Naive thymus-derived CD4-positive, alpha-beta T cell (primary cell): ENCODE measurements at regions of chr5 and their contacts with region 1.

Region 1: GRCh38 chr5:88226881-88227450 is 41.7 kb downstream of the TMEM161B start:
- DNase-seq: no peak
- ATAC-seq: no peak
- H3K4me3 ChIP-seq: no peak overlapping the region
- H3K4me3 Mint-ChIP-seq: no peak overlapping the region
- H3K27ac ChIP-seq: no peak overlapping the region
- H3K27ac Mint-ChIP-seq: peak overlapping the region in 2 of 9 donors; percentile 59 to 73
- H3K4me1 ChIP-seq: no peaks in the 10 kb centered on the region
- H3K4me1 Mint-ChIP-seq: peaks cover 0 to 6% (median 0%) of the 10 kb centered on the region in 7 donors
- H3K27me3 ChIP-seq: no peaks in the 10 kb centered on the region
- H3K27me3 Mint-ChIP-seq: no peaks in the 10 kb centered on the region

Region 2: GRCh38 chr5:88245893-88246244 is 18.9 kb after region 1 on chr5:
- CTCF ChIA-PET with region 1: interaction called, 3 read pairs
- POLR2A ChIA-PET with region 1: no interaction called
- intact Hi-C with region 1: loop called in 1 of 2 experiments (anchors 2 kb)
- DNase-seq: no peak
- ATAC-seq: no peak
- H3K4me3 ChIP-seq: no peak overlapping the region
- H3K4me3 Mint-ChIP-seq: no peak overlapping the region
- H3K27ac ChIP-seq: no peak overlapping the region
- H3K27ac Mint-ChIP-seq: no peak overlapping the region
- H3K4me1 ChIP-seq: peaks cover 0 to 6% of the 10 kb centered on the region in 2 donors
- H3K4me1 Mint-ChIP-seq: peaks cover 27 to 87% (median 80%) of the 10 kb centered on the region in 7 donors
- H3K27me3 ChIP-seq: no peaks in the 10 kb centered on the region
- H3K27me3 Mint-ChIP-seq: no peaks in the 10 kb centered on the region